ENCODE measurements at regions of chr11 and their contacts with region 1.

Region 1: DNA sequence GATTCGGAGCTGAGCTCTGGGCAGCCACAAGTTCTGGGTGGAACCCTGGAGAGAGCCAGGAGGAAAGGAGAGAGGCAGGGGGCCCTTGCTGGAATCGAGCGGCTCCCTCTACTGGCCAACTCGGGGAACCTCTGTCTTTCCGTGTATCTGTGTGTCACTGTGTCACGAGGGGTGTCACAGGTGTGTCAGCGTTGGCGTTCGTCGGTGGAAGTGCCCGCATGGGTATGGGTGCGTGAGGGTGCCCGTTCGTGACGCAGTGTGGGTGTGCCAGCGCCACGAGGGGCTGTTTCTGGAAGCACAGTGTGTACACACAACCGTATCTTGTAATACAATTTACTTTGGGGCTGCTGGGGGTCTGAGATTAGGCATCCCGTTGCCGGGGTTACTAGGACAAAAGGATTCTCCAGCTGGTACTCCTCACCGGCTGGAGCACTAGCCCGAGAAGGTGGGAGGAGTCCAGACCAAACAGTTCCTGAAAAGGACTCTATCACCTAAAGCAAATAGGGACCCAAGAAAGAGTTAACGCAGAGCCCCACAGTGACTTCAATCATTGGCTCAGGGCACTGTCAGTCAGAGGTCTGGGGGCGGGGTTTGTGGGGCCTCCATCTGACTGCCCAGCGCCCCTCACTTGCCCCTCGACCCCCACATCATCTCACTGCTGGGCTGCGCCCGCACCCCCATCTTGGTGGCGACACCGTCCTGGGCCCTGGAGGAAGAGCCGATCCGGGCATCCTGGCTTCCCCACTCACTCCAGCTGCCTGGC is 2.6 kb upstream of the BCL9L start:
- DNase-seq: peak; percentile 94
- ATAC-seq: peak; percentile 52
- H3K4me3 Mint-ChIP-seq: peak overlapping the region; percentile 95
- H3K27ac Mint-ChIP-seq: peak overlapping the region; percentile 98
- H3K4me1 Mint-ChIP-seq: peaks cover 62% of the 10 kb centered on the region
- H3K27me3 Mint-ChIP-seq: peaks cover 2% of the 10 kb centered on the region
- CTCF ChIP-seq: peak; percentile 87

Region 2: GRCh38 chr11:117828611-117829368 is 1099.5 kb before region 1 on chr11:
- CTCF ChIA-PET with region 1: no interaction called
- POLR2A ChIA-PET with region 1: no interaction called
- intact Hi-C with region 1: loop called (anchors 5 kb)
- DNase-seq: peak; percentile 79
- ATAC-seq: peak; percentile 89
- H3K4me3 Mint-ChIP-seq: peak overlapping the region; percentile 44
- H3K27ac Mint-ChIP-seq: peak overlapping the region; percentile 80
- H3K4me1 Mint-ChIP-seq: peaks cover 51% of the 10 kb centered on the region
- H3K27me3 Mint-ChIP-seq: peaks cover 23% of the 10 kb centered on the region
- CTCF ChIP-seq: no peak

Region 3: DNA sequence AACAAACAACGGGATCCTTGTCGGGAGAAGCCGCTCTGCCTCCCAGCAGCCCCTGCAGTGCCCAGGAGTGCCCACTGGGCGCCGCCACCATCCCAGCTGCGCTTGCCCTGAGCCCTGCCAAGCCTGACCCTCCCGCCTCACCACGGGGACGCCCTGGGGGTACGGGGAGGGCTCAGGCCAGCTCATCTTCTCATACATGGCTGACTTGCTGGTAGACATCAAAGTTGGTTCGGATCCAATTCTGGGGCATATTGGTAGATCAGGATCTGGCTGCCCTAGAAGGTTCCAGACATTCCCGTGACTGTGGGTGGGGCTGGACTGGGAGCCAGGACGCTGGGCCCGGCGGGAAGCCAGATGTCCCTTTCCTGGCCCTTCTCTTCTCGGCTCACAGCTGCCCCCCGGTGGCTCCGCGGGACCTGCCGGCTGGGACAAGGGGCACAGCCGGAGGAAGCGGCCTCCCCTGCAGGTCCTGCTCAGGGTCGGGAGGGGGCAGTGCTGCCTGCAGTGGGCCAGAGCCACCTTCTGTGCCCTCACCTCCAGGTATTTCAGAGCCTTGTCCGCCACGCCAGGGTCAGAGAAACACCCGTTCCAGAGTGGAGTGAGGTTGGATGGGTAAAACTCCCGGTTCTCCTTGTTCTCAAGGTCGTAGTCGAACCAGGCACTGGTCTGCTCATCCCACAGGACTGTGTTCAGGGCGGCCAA is 238.3 kb before region 1 on chr11:
- CTCF ChIA-PET with region 1: interaction called, 28 read pairs
- POLR2A ChIA-PET with region 1: interaction called, 7 read pairs
- intact Hi-C with region 1: loop called (anchors 1 kb)
- DNase-seq: peak; percentile 74
- ATAC-seq: peak; percentile 95
- H3K4me3 Mint-ChIP-seq: peak overlapping the region; percentile 79
- H3K27ac Mint-ChIP-seq: peak overlapping the region; percentile 15
- H3K4me1 Mint-ChIP-seq: peaks cover 12% of the 10 kb centered on the region
- H3K27me3 Mint-ChIP-seq: peaks cover 4% of the 10 kb centered on the region
- CTCF ChIP-seq: peak; percentile 55

Region 4: GRCh38 chr11:118870396-118871345 is 57.6 kb before region 1 on chr11:
- CTCF ChIA-PET with region 1: no interaction called
- POLR2A ChIA-PET with region 1: interaction called, 15 read pairs
- intact Hi-C with region 1: loop called (anchors 1 kb)
- DNase-seq: peak; percentile 54
- ATAC-seq: peak; percentile 56
- H3K4me3 Mint-ChIP-seq: peak overlapping the region; percentile 83
- H3K27ac Mint-ChIP-seq: peak overlapping the region; percentile 99
- H3K4me1 Mint-ChIP-seq: peaks cover 68% of the 10 kb centered on the region
- H3K27me3 Mint-ChIP-seq: no peaks in the 10 kb centered on the region
- CTCF ChIP-seq: no peak

Region 5: DNA sequence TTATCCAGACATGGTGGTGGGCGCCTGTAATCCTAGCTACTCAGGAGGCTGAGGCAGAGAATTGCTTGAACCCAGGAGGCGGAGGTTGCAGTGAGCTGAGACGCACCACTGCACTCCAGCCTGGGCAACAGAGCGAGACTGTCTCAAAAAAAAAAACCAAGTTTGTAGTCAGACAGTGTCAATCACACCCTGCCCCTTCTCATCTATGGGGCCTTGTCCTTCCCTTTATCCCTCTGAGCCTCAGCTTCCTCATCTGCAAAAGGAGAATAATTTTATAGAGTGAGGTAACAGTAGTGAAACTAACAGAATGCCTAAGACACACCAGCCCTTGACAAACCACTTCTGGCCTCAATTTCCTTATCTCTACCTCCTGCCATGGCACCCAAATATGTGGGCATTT is 13.3 kb before region 1 on chr11:
- CTCF ChIA-PET with region 1: interaction called, 55 read pairs
- POLR2A ChIA-PET with region 1: interaction called, 109 read pairs
- intact Hi-C with region 1: loop called (anchors 1 kb)
- DNase-seq: no peak
- ATAC-seq: peak; percentile 53
- H3K4me3 Mint-ChIP-seq: peak overlapping the region; percentile 52
- H3K27ac Mint-ChIP-seq: peak overlapping the region; percentile 90
- H3K4me1 Mint-ChIP-seq: peaks cover 89% of the 10 kb centered on the region
- H3K27me3 Mint-ChIP-seq: no peaks in the 10 kb centered on the region
- CTCF ChIP-seq: no peak

Region 6: GRCh38 chr11:119018074-119018938 is 90.0 kb after region 1 on chr11 and contains the starts of genes RPS25 and TRAPPC4:
- CTCF ChIA-PET with region 1: no interaction called
- POLR2A ChIA-PET with region 1: interaction called, 4 read pairs
- intact Hi-C with region 1: loop called (anchors 1 kb)
- DNase-seq: peak; percentile 90
- ATAC-seq: peak; percentile 87
- H3K4me3 Mint-ChIP-seq: peak within 1 kb of the TSS; percentile 99
- H3K27ac Mint-ChIP-seq: peak within 1 kb of the TSS; percentile 100
- H3K4me1 Mint-ChIP-seq: peaks cover 54% of the 10 kb centered on the region
- H3K27me3 Mint-ChIP-seq: no peaks in the 10 kb centered on the region
- CTCF ChIP-seq: no peak
- total RNA-seq, gene RPS25: 2,191 and 2,534 TPM in 2 replicates
- total RNA-seq, gene TRAPPC4: 56.8 and 60.1 TPM in 2 replicates

Region 7: GRCh38 chr11:119168471-119169281 is 240.4 kb after region 1 on chr11 and contains the start of gene NLRX1:
- CTCF ChIA-PET with region 1: no interaction called
- POLR2A ChIA-PET with region 1: interaction called, 14 read pairs
- intact Hi-C with region 1: no loop called
- DNase-seq: peak; percentile 74
- ATAC-seq: peak; percentile 97
- H3K4me3 Mint-ChIP-seq: peak within 1 kb of the TSS; percentile 86
- H3K27ac Mint-ChIP-seq: peak within 1 kb of the TSS; percentile 50
- H3K4me1 Mint-ChIP-seq: peaks cover 5% of the 10 kb centered on the region
- H3K27me3 Mint-ChIP-seq: no peaks in the 10 kb centered on the region
- CTCF ChIP-seq: peak; percentile 69
- total RNA-seq, gene NLRX1: 9.8 TPM in 2 replicates

Measured in activated B cell treated with CpG ODN at 0.5 μM for 24 hours (primary cell).